BJ (cell line): ENCODE measurements at regions of chr19 and their contacts with region 1.

Region 1: GRCh38 chr19:41726493-41726892 is 18.1 kb downstream of the CEACAM5 start:
- DNase-seq: no peak
- H3K4me3 ChIP-seq: no peak overlapping the region
- H3K27me3 ChIP-seq: no peaks in the 10 kb centered on the region
- CTCF ChIP-seq: no peak

Region 2: DNA sequence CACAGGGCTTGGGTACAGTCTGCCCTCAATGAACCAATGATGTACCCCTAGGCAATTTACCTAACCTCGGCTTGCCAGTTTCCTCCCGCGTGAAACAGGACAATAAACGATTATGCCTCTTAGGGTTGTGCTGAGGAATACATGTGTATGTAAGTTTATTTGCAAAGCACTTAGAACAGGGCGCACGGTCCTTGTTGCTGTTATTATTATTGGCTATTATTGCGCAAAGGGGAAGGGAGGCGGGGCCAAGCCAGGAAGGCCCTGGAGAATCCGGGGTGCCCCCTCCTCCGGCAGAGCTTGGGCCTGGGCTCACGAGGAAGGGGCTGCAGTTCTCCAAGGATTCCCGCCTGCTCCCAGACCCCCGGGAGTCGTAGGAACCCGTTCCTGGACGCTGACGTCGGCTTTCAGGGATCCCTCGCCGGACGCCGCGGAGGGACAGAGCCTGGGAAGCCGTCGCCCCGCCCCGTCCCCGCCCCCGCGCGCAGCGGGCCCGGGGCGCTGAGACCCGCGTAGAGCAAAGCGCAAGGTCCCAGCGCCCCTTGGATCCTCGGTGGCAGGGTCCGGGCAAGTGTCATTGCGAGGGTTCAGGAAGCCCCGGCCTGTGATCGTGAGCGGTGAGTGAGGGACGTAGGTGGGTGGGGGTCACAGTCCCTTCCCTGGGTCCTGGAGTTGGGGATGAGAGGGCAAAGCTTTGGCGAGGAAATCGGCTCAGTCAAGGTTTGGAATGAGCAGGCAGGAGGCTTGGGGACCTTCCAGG is 350.1 kb before region 1 on chr19 and contains the start of gene TMEM91:
- CTCF ChIA-PET with region 1: no interaction called
- POLR2A ChIA-PET with region 1: no interaction called
- DNase-seq: no peak
- H3K4me3 ChIP-seq: peak within 1 kb of the TSS; percentile 50
- H3K27me3 ChIP-seq: no peaks in the 10 kb centered on the region
- CTCF ChIP-seq: no peak
- polyA plus RNA-seq, gene TMEM91: 3.2 and 5.1 TPM in 2 replicates

Region 3: GRCh38 chr19:41626877-41627276 is 99.6 kb before region 1 on chr19 and contains the start of gene CEACAM4:
- CTCF ChIA-PET with region 1: no interaction called
- POLR2A ChIA-PET with region 1: no interaction called
- DNase-seq: no peak
- H3K4me3 ChIP-seq: no peak within 1 kb of the TSS
- H3K27me3 ChIP-seq: peaks cover 1% of the 10 kb centered on the region; the same call in 1 of the 2 replicates
- CTCF ChIP-seq: no peak
- polyA plus RNA-seq, gene CEACAM4: not detected in 2 replicates

Region 4: DNA sequence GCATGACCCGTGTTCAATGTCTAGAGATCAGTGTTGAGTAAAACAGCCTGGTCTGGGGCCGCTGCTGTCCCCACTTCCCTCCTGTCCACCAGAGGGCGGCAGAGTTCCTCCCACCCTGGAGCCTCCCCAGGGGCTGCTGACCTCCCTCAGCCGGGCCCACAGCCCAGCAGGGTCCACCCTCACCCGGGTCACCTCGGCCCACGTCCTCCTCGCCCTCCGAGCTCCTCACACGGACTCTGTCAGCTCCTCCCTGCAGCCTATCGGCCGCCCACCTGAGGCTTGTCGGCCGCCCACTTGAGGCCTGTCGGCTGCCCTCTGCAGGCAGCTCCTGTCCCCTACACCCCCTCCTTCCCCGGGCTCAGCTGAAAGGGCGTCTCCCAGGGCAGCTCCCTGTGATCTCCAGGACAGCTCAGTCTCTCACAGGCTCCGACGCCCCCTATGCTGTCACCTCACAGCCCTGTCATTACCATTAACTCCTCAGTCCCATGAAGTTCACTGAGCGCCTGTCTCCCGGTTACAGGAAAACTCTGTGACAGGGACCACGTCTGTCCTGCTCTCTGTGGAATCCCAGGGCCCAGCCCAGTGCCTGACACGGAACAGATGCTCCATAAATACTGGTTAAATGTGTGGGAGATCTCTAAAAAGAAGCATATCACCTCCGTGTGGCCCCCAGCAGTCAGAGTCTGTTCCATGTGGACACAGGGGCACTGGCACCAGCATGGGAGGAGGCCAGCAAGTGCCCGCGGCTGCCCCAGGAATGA is 19.6 kb before region 1 on chr19:
- CTCF ChIA-PET with region 1: no interaction called
- POLR2A ChIA-PET with region 1: no interaction called
- DNase-seq: no peak
- H3K4me3 ChIP-seq: no peak overlapping the region
- H3K27me3 ChIP-seq: no peaks in the 10 kb centered on the region
- CTCF ChIP-seq: peak; percentile 57

Region 5: GRCh38 chr19:41753936-41754529 is 27.5 kb after region 1 on chr19:
- CTCF ChIA-PET with region 1: interaction called, 10 read pairs
- POLR2A ChIA-PET with region 1: no interaction called
- DNase-seq: no peak
- H3K4me3 ChIP-seq: no peak overlapping the region
- H3K27me3 ChIP-seq: peaks cover 6% of the 10 kb centered on the region
- CTCF ChIP-seq: peak; percentile 77